ENCODE measurements at regions of chr6 and their contacts with region 1.

Region 1: GRCh38 chr6:82270881-82271645 is 23.5 kb upstream of the IBTK start:
- DNase-seq: peak; percentile 39
- H3K4me3 ChIP-seq: no peak overlapping the region
- H3K27ac ChIP-seq: no peak overlapping the region
- H3K4me1 ChIP-seq: peaks cover 9 to 32% of the 10 kb centered on the region in 2 experiments; a peak in 3 of 4 replicates
- H3K27me3 ChIP-seq: no peaks in the 10 kb centered on the region
- CTCF ChIP-seq: peak; percentile 84
- EP300 ChIP-seq: no peak
- RAD21 ChIP-seq: peak; percentile 84

Region 2: DNA sequence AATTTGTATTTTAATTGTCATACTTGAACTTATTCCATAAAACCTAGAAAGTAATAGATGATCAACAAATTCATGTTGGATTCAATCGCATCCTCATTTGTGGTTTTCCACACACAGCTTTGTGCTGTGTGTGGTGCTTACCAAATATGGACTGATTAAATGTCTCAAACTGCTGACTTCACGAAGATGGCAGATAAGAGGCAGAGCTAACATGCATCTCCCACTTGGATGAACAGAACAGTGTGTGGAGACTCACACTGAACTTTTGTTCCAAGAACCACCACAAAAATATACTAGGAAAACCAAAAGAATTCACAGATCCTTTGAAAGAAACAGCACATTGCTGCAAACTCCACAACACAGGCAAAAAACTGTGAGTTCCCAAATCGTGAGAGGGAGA is 1122.3 kb before region 1 on chr6:
- CTCF ChIA-PET with region 1: no interaction called
- POLR2A ChIA-PET with region 1: no interaction called
- DNase-seq: no peak
- H3K4me3 ChIP-seq: no peak overlapping the region
- H3K27ac ChIP-seq: no peak overlapping the region
- H3K4me1 ChIP-seq: no peaks in the 10 kb centered on the region
- H3K27me3 ChIP-seq: no peaks in the 10 kb centered on the region
- CTCF ChIP-seq: no peak
- EP300 ChIP-seq: no peak
- RAD21 ChIP-seq: no peak

Region 3: GRCh38 chr6:82257088-82257772 is 13.8 kb before region 1 on chr6:
- CTCF ChIA-PET with region 1: interaction called, 45 read pairs
- POLR2A ChIA-PET with region 1: no interaction called
- DNase-seq: no peak
- H3K4me3 ChIP-seq: no peak overlapping the region
- H3K27ac ChIP-seq: no peak overlapping the region
- H3K4me1 ChIP-seq: peaks cover 11 to 22% of the 10 kb centered on the region in 2 experiments
- H3K27me3 ChIP-seq: no peaks in the 10 kb centered on the region
- CTCF ChIP-seq: peak; percentile 31
- EP300 ChIP-seq: no peak
- RAD21 ChIP-seq: peak; percentile 29

Region 4: GRCh38 chr6:82616386-82617028 is 345.4 kb after region 1 on chr6:
- CTCF ChIA-PET with region 1: interaction called, 18 read pairs
- POLR2A ChIA-PET with region 1: no interaction called
- DNase-seq: no peak
- H3K4me3 ChIP-seq: no peak overlapping the region
- H3K27ac ChIP-seq: no peak overlapping the region
- H3K4me1 ChIP-seq: peaks cover 0 to 16% of the 10 kb centered on the region in 2 experiments; a peak in 2 of 4 replicates
- H3K27me3 ChIP-seq: no peaks in the 10 kb centered on the region
- CTCF ChIP-seq: peak; percentile 39
- EP300 ChIP-seq: no peak
- RAD21 ChIP-seq: peak; percentile 53

Region 5: GRCh38 chr6:82712852-82713251 is 441.8 kb after region 1 on chr6:
- CTCF ChIA-PET with region 1: interaction called, 17 read pairs
- POLR2A ChIA-PET with region 1: no interaction called
- DNase-seq: peak; percentile 12
- H3K4me3 ChIP-seq: no peak overlapping the region; a peak in 1 of 4 replicates
- H3K27ac ChIP-seq: no peak overlapping the region
- H3K4me1 ChIP-seq: peaks cover 0 to 6% of the 10 kb centered on the region in 2 experiments; a peak in 2 of 4 replicates
- H3K27me3 ChIP-seq: no peaks in the 10 kb centered on the region
- CTCF ChIP-seq: peak; percentile 54
- EP300 ChIP-seq: no peak
- RAD21 ChIP-seq: peak; percentile 59

Region 6: DNA sequence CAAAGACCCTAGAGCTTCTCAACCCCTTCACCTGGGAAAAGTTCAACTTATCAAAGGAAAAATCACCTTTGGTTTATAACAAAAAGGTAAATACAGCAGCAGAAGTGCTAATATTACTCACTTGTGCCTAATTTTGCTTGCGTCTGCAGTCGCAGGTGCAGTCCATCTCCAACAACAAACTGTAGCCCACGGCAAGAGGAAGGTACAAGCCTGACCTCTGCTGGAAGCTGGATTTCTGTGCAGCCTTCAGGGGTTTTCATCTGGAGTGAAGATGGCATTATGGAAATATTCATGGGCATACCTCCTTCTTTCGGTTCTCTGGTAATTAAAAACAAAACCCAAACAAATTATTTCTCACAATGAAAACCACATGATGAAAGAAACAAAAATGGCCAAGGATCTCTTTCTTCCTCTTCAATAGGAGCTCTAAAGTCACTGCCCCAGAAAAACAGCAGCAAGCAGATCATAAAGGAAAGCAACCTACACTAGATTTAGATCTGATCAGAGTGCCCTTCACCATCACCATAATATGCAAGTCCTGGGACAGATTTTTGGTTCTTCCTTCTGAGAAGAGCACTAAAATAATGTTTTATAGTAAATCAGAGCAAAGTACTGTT is 786.8 kb after region 1 on chr6:
- CTCF ChIA-PET with region 1: interaction called, 191 read pairs
- POLR2A ChIA-PET with region 1: no interaction called
- DNase-seq: peak; percentile 57
- H3K4me3 ChIP-seq: no peak overlapping the region
- H3K27ac ChIP-seq: no peak overlapping the region
- H3K4me1 ChIP-seq: peaks cover 10 to 19% of the 10 kb centered on the region in 2 experiments; a peak in 3 of 4 replicates
- H3K27me3 ChIP-seq: no peaks in the 10 kb centered on the region
- CTCF ChIP-seq: peak; percentile 92
- EP300 ChIP-seq: no peak
- RAD21 ChIP-seq: peak; percentile 86

Measured in SK-N-SH (cell line).